K562 (cell line): ENCODE measurements at regions of chr10 and their contacts with region 1.

Region 1: GRCh38 chr10:52007091-52007490 is 307.0 kb upstream of the DKK1 start:
- DNase-seq: no peak
- ATAC-seq: no peak
- H3K4me3 ChIP-seq: no peak overlapping the region
- H3K27ac ChIP-seq: no peak overlapping the region
- H3K4me1 ChIP-seq: no peaks in the 10 kb centered on the region
- H3K27me3 ChIP-seq: no peaks in the 10 kb centered on the region
- CTCF ChIP-seq: no peak
- EP300 ChIP-seq: no peak
- POLR2A ChIP-seq: no peak
- RAD21 ChIP-seq: no peak

Region 2: DNA sequence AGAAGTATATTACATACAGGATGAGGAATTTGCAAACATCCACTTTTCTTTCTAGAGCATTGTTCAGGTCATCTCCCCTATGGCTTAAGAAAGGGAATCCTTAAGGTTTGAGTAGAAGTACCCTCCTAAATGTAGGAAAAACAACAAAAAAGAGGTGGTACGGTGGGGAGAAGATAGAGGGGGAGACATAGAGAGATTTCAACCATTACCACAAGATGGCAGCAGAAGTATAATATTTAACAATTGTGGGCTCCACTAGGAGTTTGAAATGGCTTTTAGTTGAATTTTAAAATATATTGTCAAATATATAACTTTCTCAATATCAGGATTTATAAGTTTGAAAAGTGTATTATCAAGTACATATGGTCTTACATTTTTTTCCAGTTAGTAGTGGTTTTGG is 1005.5 kb before region 1 on chr10:
- CTCF ChIA-PET with region 1: no interaction called
- POLR2A ChIA-PET with region 1: no interaction called
- in situ Hi-C with region 1: no loop called
- intact Hi-C with region 1: loop called (anchors 5 kb)
- DNase-seq: peak in 3 of 4 experiments; percentile 18 to 32 (median 31)
- ATAC-seq: peak; percentile 86
- H3K4me3 ChIP-seq: no peak overlapping the region
- H3K27ac ChIP-seq: no peak overlapping the region
- H3K4me1 ChIP-seq: no peaks in the 10 kb centered on the region
- H3K27me3 ChIP-seq: no peaks in the 10 kb centered on the region
- CTCF ChIP-seq: peak; percentile 38 to 69 (median 55); a peak in 5 of 6 replicates
- EP300 ChIP-seq: no peak
- POLR2A ChIP-seq: no peak
- RAD21 ChIP-seq: peak; percentile 57 to 71

Region 3: DNA sequence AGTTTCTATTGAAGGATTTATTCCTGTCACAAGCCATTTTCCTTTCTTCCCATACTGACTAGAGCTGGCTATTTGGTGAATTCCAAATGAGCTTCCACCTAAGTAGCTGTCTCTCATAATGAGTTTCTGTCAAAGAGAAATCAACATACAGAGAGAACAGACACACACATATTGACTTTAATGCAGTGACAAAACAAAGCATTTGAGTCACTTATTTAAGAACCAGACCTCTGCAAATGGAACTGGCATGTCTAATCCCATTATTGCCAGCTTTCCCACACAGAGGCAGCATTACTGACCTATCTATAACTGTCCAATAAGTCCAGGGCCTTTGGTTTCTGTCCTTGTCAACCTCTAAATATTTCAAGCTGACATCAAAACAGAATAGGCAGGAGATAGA is 128.4 kb before region 1 on chr10:
- CTCF ChIA-PET with region 1: no interaction called
- POLR2A ChIA-PET with region 1: no interaction called
- in situ Hi-C with region 1: no loop called
- intact Hi-C with region 1: no loop called
- DNase-seq: no peak
- ATAC-seq: no peak
- H3K4me3 ChIP-seq: no peak overlapping the region
- H3K27ac ChIP-seq: no peak overlapping the region
- H3K4me1 ChIP-seq: no peaks in the 10 kb centered on the region
- H3K27me3 ChIP-seq: no peaks in the 10 kb centered on the region
- CTCF ChIP-seq: no peak
- EP300 ChIP-seq: no peak
- POLR2A ChIP-seq: no peak
- RAD21 ChIP-seq: no peak

Region 4: GRCh38 chr10:52050429-52051047 is 43.4 kb after region 1 on chr10:
- CTCF ChIA-PET with region 1: no interaction called
- POLR2A ChIA-PET with region 1: no interaction called
- in situ Hi-C with region 1: no loop called
- intact Hi-C with region 1: no loop called
- DNase-seq: no peak
- ATAC-seq: no peak
- H3K4me3 ChIP-seq: no peak overlapping the region
- H3K27ac ChIP-seq: no peak overlapping the region
- H3K4me1 ChIP-seq: no peaks in the 10 kb centered on the region
- H3K27me3 ChIP-seq: no peaks in the 10 kb centered on the region
- CTCF ChIP-seq: no peak
- EP300 ChIP-seq: no peak
- POLR2A ChIP-seq: no peak
- RAD21 ChIP-seq: no peak